CD8-positive, alpha-beta memory T cell (primary cell): ENCODE measurements at regions of chr12 and their contacts with region 1.

Region 1: DNA sequence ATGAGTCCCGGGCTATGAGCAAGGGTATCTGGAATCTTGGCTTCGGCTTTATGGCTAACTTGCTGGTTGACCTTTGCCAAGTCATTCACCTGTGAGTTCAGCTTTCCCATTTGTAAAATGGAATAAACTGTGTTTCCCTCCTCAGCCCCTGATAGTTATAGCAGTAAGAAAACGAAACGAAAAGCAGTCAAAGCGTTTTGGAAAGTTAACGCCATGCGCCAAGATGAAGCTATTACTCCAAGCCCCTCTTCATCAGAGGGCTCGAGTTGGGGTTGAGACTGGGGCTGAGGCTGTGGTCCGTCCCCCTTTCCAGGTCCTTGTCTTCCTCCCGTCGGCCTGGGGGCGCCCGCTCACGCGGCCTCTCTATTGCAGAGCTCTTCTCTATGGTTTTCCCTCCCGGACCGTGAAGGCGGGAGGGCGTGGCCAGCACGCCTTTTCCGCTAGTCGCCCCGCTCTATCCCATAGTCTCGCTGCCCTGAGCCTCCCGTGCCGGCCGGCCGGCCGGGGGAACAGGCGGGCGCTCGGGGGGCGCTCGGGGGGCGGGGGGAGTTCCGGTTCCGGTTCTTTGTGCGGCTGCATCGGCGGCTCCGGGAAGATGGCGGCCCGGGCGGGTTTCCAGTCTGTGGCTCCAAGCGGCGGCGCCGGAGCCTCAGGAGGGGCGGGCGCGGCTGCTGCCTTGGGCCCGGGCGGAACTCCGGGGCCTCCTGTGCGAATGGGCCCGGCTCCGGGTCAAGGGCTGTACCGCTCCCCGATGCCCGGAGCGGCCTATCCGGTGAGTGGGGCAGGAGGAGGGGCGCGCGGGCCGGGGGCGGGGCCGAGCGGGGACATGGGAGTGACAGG is at the start of gene SMARCD1:
- DNase-seq: peak; percentile 75 to 88 (median 80)
- H3K4me3 ChIP-seq: peak within 1 kb of the TSS; percentile 76
- H3K4me3 Mint-ChIP-seq: peak within 1 kb of the TSS; percentile 94 to 97 (median 96)
- H3K27ac ChIP-seq: peak within 1 kb of the TSS; percentile 89
- H3K27ac Mint-ChIP-seq: peak within 1 kb of the TSS; percentile 95 to 98 (median 98)
- H3K4me1 ChIP-seq: peaks cover 18% of the 10 kb centered on the region
- H3K4me1 Mint-ChIP-seq: peaks cover 27 to 38% (median 29%) of the 10 kb centered on the region in 3 donors
- H3K27me3 ChIP-seq: no peaks in the 10 kb centered on the region
- H3K27me3 Mint-ChIP-seq: no peaks in the 10 kb centered on the region
- total RNA-seq, gene SMARCD1: 72.3 to 78.2 TPM

Region 2: GRCh38 chr12:49987625-49988303 is 97.2 kb before region 1 on chr12:
- CTCF ChIA-PET with region 1: no interaction called
- POLR2A ChIA-PET with region 1: no interaction called
- DNase-seq: no peak
- H3K4me3 ChIP-seq: no peak overlapping the region
- H3K4me3 Mint-ChIP-seq: no peak overlapping the region
- H3K27ac ChIP-seq: no peak overlapping the region
- H3K27ac Mint-ChIP-seq: no peak overlapping the region
- H3K4me1 ChIP-seq: no peaks in the 10 kb centered on the region
- H3K4me1 Mint-ChIP-seq: no peaks in the 10 kb centered on the region
- H3K27me3 ChIP-seq: no peaks in the 10 kb centered on the region
- H3K27me3 Mint-ChIP-seq: no peaks in the 10 kb centered on the region

Region 3: DNA sequence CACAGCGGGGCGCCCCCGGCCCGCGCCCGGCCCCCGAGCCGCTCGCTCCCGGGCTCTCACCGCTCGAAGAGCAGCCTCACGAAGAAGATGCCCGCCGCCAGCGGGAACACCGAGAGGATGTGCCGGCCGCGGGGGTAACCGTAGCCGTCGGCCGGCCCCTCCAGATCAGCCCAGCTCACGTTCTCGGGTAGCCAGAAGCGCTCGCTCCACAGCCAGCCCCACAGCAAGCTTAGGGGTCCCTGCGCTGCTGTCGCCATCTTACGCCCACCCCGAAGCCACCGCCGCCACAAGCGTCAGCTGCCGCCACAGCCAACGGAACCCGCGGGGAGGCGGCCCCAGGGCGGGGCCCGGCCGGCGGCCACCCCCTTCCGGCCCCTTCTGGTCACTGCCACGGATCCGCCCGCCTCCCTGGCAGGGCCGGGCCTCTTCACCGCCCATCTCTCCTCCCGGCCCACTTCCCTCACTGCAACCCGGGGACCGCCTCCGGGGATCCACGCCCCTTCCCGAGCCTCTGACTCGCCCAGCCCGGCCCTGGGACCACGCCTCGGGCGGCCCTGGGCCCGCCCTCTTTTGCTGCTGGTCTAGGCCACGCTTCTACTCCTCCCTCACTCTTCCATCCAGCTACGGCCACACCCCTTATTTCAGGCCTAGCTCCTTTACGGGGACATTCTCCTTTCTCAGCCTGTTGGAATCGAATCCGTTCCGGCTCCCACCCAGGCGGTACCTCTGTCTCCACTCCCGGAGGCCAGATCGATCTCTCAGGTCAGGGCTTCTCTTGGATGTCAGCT is 82.2 kb after region 1 on chr12 and contains the start of gene CERS5:
- CTCF ChIA-PET with region 1: interaction called, 22 read pairs
- POLR2A ChIA-PET with region 1: interaction called, 17 read pairs
- DNase-seq: peak; percentile 96 to 98 (median 97)
- H3K4me3 ChIP-seq: peak within 1 kb of the TSS; percentile 90
- H3K4me3 Mint-ChIP-seq: peak within 1 kb of the TSS; percentile 87 to 97 (median 95)
- H3K27ac ChIP-seq: peak within 1 kb of the TSS; percentile 88
- H3K27ac Mint-ChIP-seq: peak within 1 kb of the TSS; percentile 87 to 98 (median 97)
- H3K4me1 ChIP-seq: peaks cover 25% of the 10 kb centered on the region
- H3K4me1 Mint-ChIP-seq: peaks cover 21 to 37% (median 32%) of the 10 kb centered on the region in 3 donors
- H3K27me3 ChIP-seq: no peaks in the 10 kb centered on the region
- H3K27me3 Mint-ChIP-seq: no peaks in the 10 kb centered on the region
- total RNA-seq, gene CERS5: 55.4 to 62.1 TPM

Region 4: DNA sequence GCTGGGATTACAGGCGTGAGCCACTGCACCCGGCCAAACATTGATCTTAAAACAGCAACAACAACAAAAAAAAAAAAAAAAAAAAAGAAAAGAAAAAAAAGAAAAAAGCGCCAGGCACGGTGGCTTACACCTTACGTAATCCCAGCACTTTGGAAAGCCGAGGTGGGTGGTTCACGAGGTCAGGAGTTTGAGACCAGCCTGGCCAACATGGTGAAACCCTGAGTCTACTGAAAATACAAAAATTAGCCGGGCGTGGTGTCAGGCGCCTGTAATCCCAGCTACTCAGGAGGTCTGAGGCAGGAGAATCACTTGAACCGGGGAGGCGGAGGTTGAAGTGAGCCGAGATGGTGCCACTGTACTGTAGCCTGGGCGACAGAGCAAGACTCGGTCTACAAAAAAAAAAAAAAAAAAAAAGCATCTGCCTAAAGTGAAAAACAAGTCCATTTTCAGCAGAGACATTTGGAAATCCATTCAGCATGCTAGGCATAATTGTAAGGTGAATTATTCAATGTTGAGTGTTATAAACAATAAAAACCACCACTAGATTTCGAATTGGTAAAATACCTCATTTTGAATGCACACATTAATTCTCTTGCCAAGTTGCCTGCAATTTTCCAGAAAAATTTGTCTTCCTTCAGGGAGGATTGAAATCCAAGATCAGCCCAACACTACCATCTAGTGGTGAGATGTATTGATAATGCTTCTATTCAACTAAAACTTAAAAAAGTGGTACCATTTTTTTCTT is 90.1 kb after region 1 on chr12:
- CTCF ChIA-PET with region 1: interaction called, 22 read pairs
- POLR2A ChIA-PET with region 1: interaction called, 3 read pairs
- DNase-seq: peak in 2 of 5 donors; percentile 48 to 54
- H3K4me3 ChIP-seq: no peak overlapping the region
- H3K4me3 Mint-ChIP-seq: no peak overlapping the region
- H3K27ac ChIP-seq: no peak overlapping the region
- H3K27ac Mint-ChIP-seq: peak overlapping the region in 1 of 8 donors; percentile 53
- H3K4me1 ChIP-seq: no peaks in the 10 kb centered on the region
- H3K4me1 Mint-ChIP-seq: no peaks in the 10 kb centered on the region
- H3K27me3 ChIP-seq: no peaks in the 10 kb centered on the region
- H3K27me3 Mint-ChIP-seq: no peaks in the 10 kb centered on the region